ENCODE measurements at regions of chr1 and their contacts with region 1.

Region 1: DNA sequence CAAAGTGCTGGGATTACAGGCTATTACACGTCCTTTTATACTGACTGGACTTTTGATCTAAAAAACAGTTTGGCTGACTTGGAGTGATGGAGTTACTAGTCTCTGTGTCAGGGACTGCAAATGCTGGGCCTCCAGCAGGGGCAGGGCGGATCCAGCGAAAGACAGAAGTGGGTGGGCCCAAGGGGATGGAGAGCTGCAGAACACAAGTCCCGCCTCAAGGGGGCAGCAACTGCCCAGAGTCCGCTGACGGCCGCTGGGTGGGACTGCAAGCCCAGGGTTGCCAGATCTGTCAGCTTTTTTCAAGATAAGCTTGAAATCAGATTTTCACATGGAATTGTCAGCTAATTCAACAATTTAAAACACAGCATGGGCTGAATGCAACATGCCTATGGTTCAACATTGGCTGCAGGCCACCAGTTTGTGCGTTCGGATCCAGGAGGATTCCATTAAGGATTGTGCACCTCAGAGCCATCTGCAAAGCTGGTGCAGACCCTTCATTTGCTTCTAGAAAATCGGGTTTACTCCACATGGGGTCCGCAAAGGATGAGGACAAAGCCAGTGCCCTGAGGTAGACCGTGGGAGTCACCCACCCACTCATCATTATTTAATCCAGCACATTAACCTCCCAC is 10.7 kb downstream of the STMN1 start:
- DNase-seq: peak; percentile 86 to 96 (median 93)
- ATAC-seq: peak; percentile 100
- H3K4me3 ChIP-seq: no peak overlapping the region
- H3K4me3 Mint-ChIP-seq: peak overlapping the region in 1 of 10 donors; percentile 6
- H3K27ac ChIP-seq: no peak overlapping the region
- H3K27ac Mint-ChIP-seq: peak overlapping the region in 8 of 9 donors; percentile 8 to 76 (median 40)
- H3K4me1 ChIP-seq: peaks cover 0 to 9% of the 10 kb centered on the region in 2 donors
- H3K4me1 Mint-ChIP-seq: peaks cover 7 to 31% (median 11%) of the 10 kb centered on the region in 7 donors
- H3K27me3 ChIP-seq: no peaks in the 10 kb centered on the region
- H3K27me3 Mint-ChIP-seq: no peaks in the 10 kb centered on the region

Region 2: GRCh38 chr1:24743404-24744211 is 1151.9 kb before region 1 on chr1:
- CTCF ChIA-PET with region 1: no interaction called
- POLR2A ChIA-PET with region 1: no interaction called
- intact Hi-C with region 1: no loop called
- DNase-seq: no peak
- ATAC-seq: no peak
- H3K4me3 ChIP-seq: no peak overlapping the region
- H3K4me3 Mint-ChIP-seq: peak overlapping the region; percentile 29 to 94 (median 58)
- H3K27ac ChIP-seq: no peak overlapping the region
- H3K27ac Mint-ChIP-seq: peak overlapping the region in 5 of 9 donors; percentile 46 to 80 (median 76)
- H3K4me1 ChIP-seq: peaks cover 0 to 4% of the 10 kb centered on the region in 2 donors
- H3K4me1 Mint-ChIP-seq: peaks cover 7 to 49% (median 15%) of the 10 kb centered on the region in 7 donors
- H3K27me3 ChIP-seq: no peaks in the 10 kb centered on the region
- H3K27me3 Mint-ChIP-seq: peaks cover 0 to 10% (median 0%) of the 10 kb centered on the region in 5 donors

Region 3: DNA sequence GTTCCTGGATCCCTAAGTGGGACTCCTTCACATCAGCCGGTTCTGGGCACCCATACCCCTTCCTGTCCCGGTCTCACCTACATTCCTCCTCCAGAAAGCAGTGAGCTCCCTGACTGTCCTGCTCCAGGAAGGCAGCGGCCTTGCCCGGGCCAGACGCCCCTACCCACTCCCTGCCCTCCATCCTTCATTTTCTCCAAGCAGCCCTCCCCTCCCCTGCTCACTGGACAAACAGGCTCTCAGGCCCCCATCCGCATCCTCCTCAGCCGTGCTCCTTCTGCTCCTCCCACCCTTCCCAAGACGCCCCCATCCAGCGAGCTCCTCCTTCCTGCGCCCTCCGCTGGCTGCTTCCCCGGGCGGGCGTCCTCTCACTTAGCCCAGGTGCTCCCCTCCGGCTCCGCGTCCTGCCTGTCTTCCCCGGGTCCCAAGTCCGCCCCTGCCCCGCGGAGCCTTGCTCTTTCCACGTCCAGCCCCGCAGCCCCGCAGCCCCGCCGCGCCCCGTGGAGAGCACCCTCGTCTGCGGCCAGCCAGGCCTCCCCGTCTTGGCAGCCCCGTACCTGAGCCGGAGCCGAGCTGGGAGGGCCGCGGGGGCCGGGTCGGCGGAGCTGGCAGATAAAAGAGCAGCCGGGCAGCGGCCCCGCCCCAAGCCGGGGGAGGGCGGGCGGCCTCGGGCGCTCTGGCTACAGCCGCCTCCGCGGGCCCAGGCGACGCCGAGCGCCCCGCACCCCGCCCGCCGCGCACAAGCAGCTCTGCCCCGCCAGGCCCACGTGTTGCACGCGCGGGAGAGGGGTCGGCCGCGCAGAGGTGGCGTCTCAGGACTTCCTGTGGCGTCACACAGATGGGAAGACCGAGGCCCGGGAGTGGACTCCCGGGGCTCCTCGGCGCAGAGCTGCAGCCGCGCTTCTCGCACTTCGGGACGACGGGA is 20.3 kb before region 1 on chr1 and contains the start of gene PAQR7:
- CTCF ChIA-PET with region 1: interaction called, 10 read pairs
- POLR2A ChIA-PET with region 1: interaction called, 5 read pairs
- intact Hi-C with region 1: no loop called
- DNase-seq: peak; percentile 47 to 74 (median 53)
- ATAC-seq: peak; percentile 89
- H3K4me3 ChIP-seq: peak within 1 kb of the TSS; percentile 64
- H3K4me3 Mint-ChIP-seq: peak within 1 kb of the TSS; percentile 75 to 91 (median 86)
- H3K27ac ChIP-seq: peak within 1 kb of the TSS; percentile 56
- H3K27ac Mint-ChIP-seq: peak within 1 kb of the TSS; percentile 54 to 89 (median 81)
- H3K4me1 ChIP-seq: peaks cover 9 to 11% of the 10 kb centered on the region in 2 donors
- H3K4me1 Mint-ChIP-seq: peaks cover 0 to 16% (median 7%) of the 10 kb centered on the region in 7 donors
- H3K27me3 ChIP-seq: no peaks in the 10 kb centered on the region
- H3K27me3 Mint-ChIP-seq: peaks cover 0 to 23% (median 0%) of the 10 kb centered on the region in 5 donors
- total RNA-seq, gene PAQR7: 3.4 to 6.0 (median 4.0) TPM

Region 4: GRCh38 chr1:25971066-25971810 is 75.8 kb after region 1 on chr1:
- CTCF ChIA-PET with region 1: interaction called, 27 read pairs
- POLR2A ChIA-PET with region 1: interaction called, 13 read pairs
- intact Hi-C with region 1: loop called in 1 of 2 experiments (anchors 1 kb)
- DNase-seq: peak in 7 of 9 donors; percentile 60 to 77 (median 69)
- ATAC-seq: peak; percentile 88
- H3K4me3 ChIP-seq: peak overlapping the region; percentile 34
- H3K4me3 Mint-ChIP-seq: peak overlapping the region; percentile 21 to 80 (median 61)
- H3K27ac ChIP-seq: peak overlapping the region; percentile 61
- H3K27ac Mint-ChIP-seq: peak overlapping the region; percentile 74 to 93 (median 85)
- H3K4me1 ChIP-seq: peaks cover 0 to 23% of the 10 kb centered on the region in 2 donors
- H3K4me1 Mint-ChIP-seq: peaks cover 33 to 74% (median 52%) of the 10 kb centered on the region in 7 donors
- H3K27me3 ChIP-seq: no peaks in the 10 kb centered on the region
- H3K27me3 Mint-ChIP-seq: no peaks in the 10 kb centered on the region

Region 5: GRCh38 chr1:25990702-25991395 is 95.4 kb after region 1 on chr1:
- CTCF ChIA-PET with region 1: interaction called, 361 read pairs
- POLR2A ChIA-PET with region 1: interaction called, 226 read pairs
- intact Hi-C with region 1: no loop called
- DNase-seq: peak in 8 of 9 donors; percentile 31 to 59 (median 56)
- ATAC-seq: peak; percentile 93
- H3K4me3 ChIP-seq: peak overlapping the region; percentile 63
- H3K4me3 Mint-ChIP-seq: peak overlapping the region; percentile 82 to 97 (median 90)
- H3K27ac ChIP-seq: peak overlapping the region; percentile 86
- H3K27ac Mint-ChIP-seq: peak overlapping the region; percentile 81 to 94 (median 91)
- H3K4me1 ChIP-seq: peaks cover 36 to 37% of the 10 kb centered on the region in 2 donors
- H3K4me1 Mint-ChIP-seq: peaks cover 42 to 89% (median 84%) of the 10 kb centered on the region in 7 donors
- H3K27me3 ChIP-seq: no peaks in the 10 kb centered on the region
- H3K27me3 Mint-ChIP-seq: no peaks in the 10 kb centered on the region

Region 6: GRCh38 chr1:26035959-26036755 is 140.7 kb after region 1 on chr1:
- CTCF ChIA-PET with region 1: interaction called, 5 read pairs
- POLR2A ChIA-PET with region 1: no interaction called
- intact Hi-C with region 1: loop called in 1 of 2 experiments (anchors 1 kb)
- DNase-seq: peak; percentile 53 to 89 (median 73)
- ATAC-seq: peak; percentile 87
- H3K4me3 ChIP-seq: peak overlapping the region; percentile 99
- H3K4me3 Mint-ChIP-seq: peak overlapping the region; percentile 93 to 97 (median 96)
- H3K27ac ChIP-seq: peak overlapping the region; percentile 87
- H3K27ac Mint-ChIP-seq: peak overlapping the region; percentile 74 to 96 (median 90)
- H3K4me1 ChIP-seq: peaks cover 5 to 6% of the 10 kb centered on the region in 2 donors
- H3K4me1 Mint-ChIP-seq: peaks cover 0 to 15% (median 8%) of the 10 kb centered on the region in 7 donors
- H3K27me3 ChIP-seq: no peaks in the 10 kb centered on the region
- H3K27me3 Mint-ChIP-seq: peaks cover 0 to 19% (median 0%) of the 10 kb centered on the region in 5 donors

Region 7: DNA sequence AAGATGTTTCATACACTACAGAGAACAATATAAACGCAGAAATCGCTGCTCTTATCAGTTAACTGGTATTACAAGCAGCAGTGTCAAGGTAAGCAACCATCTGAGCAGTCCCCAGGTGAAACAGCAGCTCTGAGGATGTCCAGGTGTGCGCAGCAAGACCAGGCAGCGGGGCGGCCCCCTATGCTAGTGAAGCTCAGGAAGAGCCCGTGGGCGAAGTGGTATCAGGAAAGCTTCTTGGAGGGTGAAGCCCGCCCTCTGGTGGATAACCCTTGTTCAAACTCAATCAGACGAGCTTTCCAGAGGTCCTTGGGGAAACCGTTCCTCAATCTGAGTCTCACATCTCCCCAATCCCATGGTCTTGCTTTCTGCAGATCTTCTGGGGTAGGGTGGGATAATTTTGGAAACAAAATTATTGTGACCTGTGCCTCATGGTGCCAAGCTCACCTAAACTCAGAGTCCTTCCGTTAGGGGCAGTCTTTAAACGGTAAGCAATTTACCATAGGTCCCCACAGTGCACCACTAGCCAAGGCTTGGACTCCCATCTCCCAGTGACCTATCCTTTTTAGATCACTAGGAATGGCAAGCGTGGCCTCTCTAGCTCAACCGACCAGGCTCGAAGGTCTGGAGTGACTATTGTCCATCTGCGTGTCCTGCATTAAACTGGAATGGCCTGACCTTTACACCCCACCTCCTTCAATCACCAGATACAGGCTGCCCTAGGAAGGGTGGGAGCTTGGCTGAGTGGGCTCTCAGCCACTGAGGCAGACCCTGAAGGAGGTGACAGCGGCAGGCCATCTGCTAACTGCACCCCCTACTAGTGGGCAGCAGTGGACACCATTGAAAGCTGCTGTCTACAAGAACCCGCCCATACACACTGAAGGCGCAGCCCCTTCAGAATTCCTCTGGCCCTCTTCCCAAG is 249.8 kb after region 1 on chr1:
- CTCF ChIA-PET with region 1: interaction called, 4 read pairs
- POLR2A ChIA-PET with region 1: no interaction called
- intact Hi-C with region 1: loop called in 1 of 2 experiments (anchors 1 kb)
- DNase-seq: peak; percentile 52 to 77 (median 72)
- ATAC-seq: peak; percentile 99
- H3K4me3 ChIP-seq: no peak overlapping the region
- H3K4me3 Mint-ChIP-seq: peak overlapping the region in 5 of 10 donors; percentile 15 to 66 (median 37)
- H3K27ac ChIP-seq: no peak overlapping the region
- H3K27ac Mint-ChIP-seq: peak overlapping the region in 1 of 9 donors; percentile 19
- H3K4me1 ChIP-seq: no peaks in the 10 kb centered on the region
- H3K4me1 Mint-ChIP-seq: peaks cover 0 to 8% (median 4%) of the 10 kb centered on the region in 7 donors
- H3K27me3 ChIP-seq: no peaks in the 10 kb centered on the region
- H3K27me3 Mint-ChIP-seq: peaks cover 0 to 32% (median 0%) of the 10 kb centered on the region in 5 donors